AG04450 (cell line): ENCODE measurements at regions of chr1 and their contacts with region 1.

Region 1: GRCh38 chr1:24688621-24689195 is 45.6 kb downstream of the SRRM1 start:
- DNase-seq: peak; percentile 38
- H3K4me3 ChIP-seq: no peak overlapping the region
- H3K27ac ChIP-seq: no peak overlapping the region
- H3K27me3 ChIP-seq: no peaks in the 10 kb centered on the region
- CTCF ChIP-seq: peak; percentile 95

Region 2: GRCh38 chr1:24216276-24217074 is 472.2 kb before region 1 on chr1:
- CTCF ChIA-PET with region 1: no interaction called
- POLR2A ChIA-PET with region 1: no interaction called
- DNase-seq: no peak
- H3K4me3 ChIP-seq: no peak overlapping the region
- H3K27ac ChIP-seq: no peak overlapping the region
- H3K27me3 ChIP-seq: peaks cover 51% of the 10 kb centered on the region
- CTCF ChIP-seq: no peak

Region 3: GRCh38 chr1:24632827-24633165 is 55.9 kb before region 1 on chr1:
- CTCF ChIA-PET with region 1: no interaction called
- POLR2A ChIA-PET with region 1: no interaction called
- DNase-seq: no peak
- H3K4me3 ChIP-seq: no peak overlapping the region
- H3K27ac ChIP-seq: no peak overlapping the region
- H3K27me3 ChIP-seq: peaks cover 11% of the 10 kb centered on the region
- CTCF ChIP-seq: no peak

Region 4: GRCh38 chr1:24654011-24654410 is 34.7 kb before region 1 on chr1:
- CTCF ChIA-PET with region 1: interaction called, 10 read pairs
- POLR2A ChIA-PET with region 1: no interaction called
- DNase-seq: no peak
- H3K4me3 ChIP-seq: no peak overlapping the region
- H3K27ac ChIP-seq: no peak overlapping the region
- H3K27me3 ChIP-seq: no peaks in the 10 kb centered on the region
- CTCF ChIP-seq: no peak

Region 5: GRCh38 chr1:24705260-24706073 is 16.8 kb after region 1 on chr1:
- CTCF ChIA-PET with region 1: interaction called, 16 read pairs
- POLR2A ChIA-PET with region 1: interaction called, 3 read pairs
- DNase-seq: peak; percentile 87
- H3K4me3 ChIP-seq: peak overlapping the region; percentile 1
- H3K27ac ChIP-seq: peak overlapping the region; percentile 71
- H3K27me3 ChIP-seq: no peaks in the 10 kb centered on the region
- CTCF ChIP-seq: no peak

Region 6: GRCh38 chr1:24744911-24745710 is 56.4 kb after region 1 on chr1 and contains the start of gene CLIC4:
- CTCF ChIA-PET with region 1: interaction called, 14 read pairs
- POLR2A ChIA-PET with region 1: interaction called, 27 read pairs
- DNase-seq: peak; percentile 99
- H3K4me3 ChIP-seq: peak within 1 kb of the TSS; percentile 93
- H3K27ac ChIP-seq: peak within 1 kb of the TSS; percentile 92
- H3K27me3 ChIP-seq: no peaks in the 10 kb centered on the region
- CTCF ChIP-seq: peak; percentile 37; the same call in 1 of the 2 replicates
- polyA plus RNA-seq, gene CLIC4: 412 and 561 TPM in 2 replicates

Region 7: DNA sequence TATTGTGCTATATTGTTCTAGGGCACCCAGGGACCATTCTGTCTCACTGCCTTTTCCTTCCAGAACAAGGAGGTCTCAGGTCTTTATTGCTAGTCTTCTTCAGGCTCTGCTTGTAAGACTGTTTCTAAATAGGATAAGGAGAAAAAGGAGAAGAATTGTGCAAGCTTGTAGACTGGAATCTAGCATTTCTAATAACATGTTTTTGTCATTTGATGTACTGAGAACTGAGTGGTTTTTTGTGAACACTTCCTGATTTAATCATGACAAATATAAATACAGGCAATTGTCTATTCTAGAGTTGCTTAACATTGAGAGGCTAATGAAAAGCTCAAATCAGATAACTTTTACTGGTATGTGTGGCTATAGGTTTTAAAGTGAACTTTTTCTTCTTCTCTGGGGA is 134.2 kb after region 1 on chr1:
- CTCF ChIA-PET with region 1: interaction called, 223 read pairs
- POLR2A ChIA-PET with region 1: no interaction called
- DNase-seq: no peak
- H3K4me3 ChIP-seq: no peak overlapping the region
- H3K27ac ChIP-seq: no peak overlapping the region
- H3K27me3 ChIP-seq: no peaks in the 10 kb centered on the region
- CTCF ChIP-seq: no peak

Region 8: GRCh38 chr1:24841593-24841992 is 152.9 kb after region 1 on chr1:
- CTCF ChIA-PET with region 1: interaction called, 107 read pairs
- POLR2A ChIA-PET with region 1: interaction called, 4 read pairs
- DNase-seq: no peak
- H3K4me3 ChIP-seq: no peak overlapping the region
- H3K27ac ChIP-seq: no peak overlapping the region
- H3K27me3 ChIP-seq: no peaks in the 10 kb centered on the region
- CTCF ChIP-seq: no peak

Region 9: GRCh38 chr1:25167331-25168199 is 478.9 kb after region 1 on chr1:
- CTCF ChIA-PET with region 1: no interaction called
- POLR2A ChIA-PET with region 1: no interaction called
- DNase-seq: no peak
- H3K4me3 ChIP-seq: no peak overlapping the region
- H3K27ac ChIP-seq: peak overlapping the region; percentile 21
- H3K27me3 ChIP-seq: peaks cover 12% of the 10 kb centered on the region
- CTCF ChIP-seq: no peak